Posterior cingulate gyrus (tissue), 11 donors: ENCODE measurements at regions of chr3 and their contacts with region 1.

Region 1: DNA sequence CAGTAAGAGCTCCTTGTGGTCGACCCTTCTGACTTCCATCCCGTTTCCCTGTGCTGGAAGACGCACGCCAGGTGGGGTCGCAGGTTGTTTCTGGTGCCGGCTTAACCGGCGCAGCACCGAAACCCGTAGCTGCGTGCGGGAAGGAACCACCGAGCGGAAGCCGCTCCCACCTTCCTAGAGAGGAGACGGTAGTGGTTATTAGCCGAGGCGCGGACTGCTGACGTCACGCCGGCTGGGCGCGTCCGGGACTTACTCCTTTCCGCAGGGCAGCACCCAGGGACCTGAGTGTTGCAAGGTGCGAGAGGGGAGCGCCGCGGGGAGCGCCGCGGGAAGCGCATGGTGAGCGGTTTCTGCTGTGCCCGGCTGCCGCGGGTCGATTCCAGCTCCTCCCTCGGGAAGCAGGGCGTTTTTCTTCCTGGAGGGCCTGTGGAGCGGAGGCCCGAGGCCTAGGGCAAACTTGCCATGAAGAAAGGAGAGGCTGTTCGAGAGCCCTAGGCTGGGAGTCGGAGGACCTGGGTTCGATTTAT is at the start of gene ZNF501:
- DNase-seq: peak; percentile 76 to 98 (median 92)

Region 2: GRCh38 chr3:44712455-44713075 is 16.9 kb before region 1 on chr3 and contains the start of gene ZNF502:
- intact Hi-C with region 1: loop called (anchors 1 kb)
- DNase-seq: peak; percentile 81 to 98 (median 92)

Region 3: GRCh38 chr3:44825264-44825925 is 95.9 kb after region 1 on chr3:
- intact Hi-C with region 1: no loop called
- DNase-seq: no peak